WTC11 (cell line): ENCODE measurements at regions of chr5 and their contacts with region 1.

Region 1: GRCh38 chr5:43631182-43631910 is 28.4 kb downstream of the NNT start:
- DNase-seq: peak; percentile 40
- ATAC-seq: peak; percentile 91
- H3K4me3 Mint-ChIP-seq: no peak overlapping the region
- H3K27ac Mint-ChIP-seq: no peak overlapping the region
- H3K4me1 Mint-ChIP-seq: peaks cover 5% of the 10 kb centered on the region; the same call in 1 of the 2 replicates
- H3K27me3 Mint-ChIP-seq: no peaks in the 10 kb centered on the region
- CTCF ChIP-seq: peak; percentile 56

Region 2: GRCh38 chr5:43602461-43603343 is 28.6 kb before region 1 on chr5 and contains the start of gene NNT:
- CTCF ChIA-PET with region 1: interaction called, 18 read pairs
- POLR2A ChIA-PET with region 1: interaction called, 4 read pairs
- DNase-seq: peak; percentile 80
- ATAC-seq: peak; percentile 83
- H3K4me3 Mint-ChIP-seq: peak within 1 kb of the TSS; percentile 74
- H3K27ac Mint-ChIP-seq: peak within 1 kb of the TSS; percentile 42
- H3K4me1 Mint-ChIP-seq: peaks cover 45% of the 10 kb centered on the region
- H3K27me3 Mint-ChIP-seq: no peaks in the 10 kb centered on the region
- CTCF ChIP-seq: no peak
- total RNA-seq, gene NNT: 32.0 to 37.6 TPM (median 33.1 TPM) in 3 replicates

Region 3: GRCh38 chr5:43646992-43647391 is 15.6 kb after region 1 on chr5:
- CTCF ChIA-PET with region 1: interaction called, 22 read pairs
- POLR2A ChIA-PET with region 1: no interaction called
- DNase-seq: no peak
- ATAC-seq: no peak
- H3K4me3 Mint-ChIP-seq: no peak overlapping the region
- H3K27ac Mint-ChIP-seq: no peak overlapping the region
- H3K4me1 Mint-ChIP-seq: no peaks in the 10 kb centered on the region
- H3K27me3 Mint-ChIP-seq: no peaks in the 10 kb centered on the region
- CTCF ChIP-seq: no peak

Region 4: GRCh38 chr5:44332285-44332971 is 701.1 kb after region 1 on chr5:
- CTCF ChIA-PET with region 1: interaction called, 14 read pairs
- POLR2A ChIA-PET with region 1: no interaction called
- DNase-seq: peak; percentile 10
- ATAC-seq: peak; percentile 91
- H3K4me3 Mint-ChIP-seq: no peak overlapping the region
- H3K27ac Mint-ChIP-seq: no peak overlapping the region
- H3K4me1 Mint-ChIP-seq: peaks cover 17% of the 10 kb centered on the region
- H3K27me3 Mint-ChIP-seq: no peaks in the 10 kb centered on the region
- CTCF ChIP-seq: peak; percentile 50

Region 5: DNA sequence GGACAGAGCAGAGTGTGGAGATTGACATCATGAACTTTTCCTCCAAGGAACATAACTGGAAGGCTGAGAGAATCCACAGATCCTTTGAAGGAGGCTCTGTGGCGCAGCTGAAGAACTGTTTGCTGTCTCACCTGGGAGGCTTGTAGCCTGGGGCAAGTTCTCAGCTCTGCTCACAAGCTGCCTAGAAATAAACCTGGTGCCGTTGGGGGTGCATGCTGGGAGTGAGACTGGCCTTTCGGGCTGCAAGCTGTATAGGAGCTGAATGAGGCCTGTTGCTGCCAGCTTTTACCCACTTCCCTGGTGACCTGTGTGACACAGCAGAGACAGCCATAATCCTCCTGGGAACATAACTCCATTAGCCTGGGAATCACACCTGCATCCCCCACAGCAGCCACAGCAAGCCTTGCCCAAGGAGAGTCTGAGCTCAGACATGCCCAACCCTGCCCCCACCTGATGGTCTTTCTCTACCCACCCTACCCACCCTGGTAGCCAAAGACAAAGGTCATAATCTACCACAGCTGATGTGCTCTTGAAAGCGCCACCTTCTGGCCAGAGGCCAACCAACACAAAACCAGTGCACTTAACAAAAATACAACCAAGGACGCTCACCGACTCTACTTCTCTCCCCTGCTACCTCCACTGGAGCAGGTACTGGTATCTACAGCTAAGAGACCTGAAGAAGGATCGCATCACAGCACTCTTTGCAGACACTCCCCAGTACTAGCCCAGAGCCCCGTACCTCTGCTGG is 972.4 kb after region 1 on chr5:
- CTCF ChIA-PET with region 1: interaction called, 11 read pairs
- POLR2A ChIA-PET with region 1: no interaction called
- DNase-seq: peak; percentile 60
- ATAC-seq: peak; percentile 85
- H3K4me3 Mint-ChIP-seq: no peak overlapping the region
- H3K27ac Mint-ChIP-seq: no peak overlapping the region
- H3K4me1 Mint-ChIP-seq: peaks cover 3% of the 10 kb centered on the region; the same call in 1 of the 2 replicates
- H3K27me3 Mint-ChIP-seq: no peaks in the 10 kb centered on the region
- CTCF ChIP-seq: peak; percentile 44

Region 6: DNA sequence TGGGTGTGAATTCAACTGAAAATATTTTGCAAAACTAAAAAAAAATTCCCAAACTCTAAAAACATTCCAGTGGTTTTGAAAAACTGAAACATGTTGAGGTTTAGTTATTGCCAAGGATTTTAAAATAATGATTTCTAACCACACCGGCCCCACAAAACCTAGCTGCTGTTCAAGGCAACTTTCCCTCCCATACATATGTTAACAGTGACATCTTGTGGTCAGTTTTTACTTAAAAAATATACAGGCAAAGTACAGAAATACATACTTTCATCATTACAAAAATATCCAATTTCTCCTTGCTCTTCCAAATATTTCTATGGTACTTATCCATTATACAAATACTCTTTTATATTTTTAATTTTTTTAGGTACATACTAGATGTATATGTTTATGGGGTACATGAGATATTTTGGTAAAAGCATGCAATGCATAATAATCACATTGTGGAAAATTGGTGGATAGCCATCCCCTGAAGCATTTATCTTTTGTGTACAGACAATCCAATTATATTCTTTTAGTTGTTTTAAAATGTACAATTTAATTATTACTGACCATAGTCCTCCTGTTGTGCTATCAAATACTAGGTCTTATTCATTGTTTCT is 1143.0 kb after region 1 on chr5:
- CTCF ChIA-PET with region 1: interaction called, 10 read pairs
- POLR2A ChIA-PET with region 1: no interaction called
- DNase-seq: no peak
- ATAC-seq: no peak
- H3K4me3 Mint-ChIP-seq: no peak overlapping the region
- H3K27ac Mint-ChIP-seq: no peak overlapping the region
- H3K4me1 Mint-ChIP-seq: no peaks in the 10 kb centered on the region
- H3K27me3 Mint-ChIP-seq: no peaks in the 10 kb centered on the region
- CTCF ChIP-seq: no peak